CD8-positive, alpha-beta T cell (primary cell): ENCODE measurements at regions of chr2 and their contacts with region 1.

Region 1: GRCh38 chr2:102240640-102241370 is 54.0 kb downstream of the IL1RL2 start:
- DNase-seq: peak; percentile 71 to 92 (median 85)
- ATAC-seq: peak; percentile 92
- H3K4me3 ChIP-seq: no peak overlapping the region
- H3K4me3 Mint-ChIP-seq: peak overlapping the region; percentile 22
- H3K27ac ChIP-seq: peak overlapping the region in 1 of 2 experiments; percentile 22
- H3K27ac Mint-ChIP-seq: no peak overlapping the region
- H3K4me1 ChIP-seq: peaks cover 4% of the 10 kb centered on the region
- H3K4me1 Mint-ChIP-seq: peaks cover 9% of the 10 kb centered on the region
- H3K27me3 ChIP-seq: no peaks in the 10 kb centered on the region
- H3K27me3 Mint-ChIP-seq: peaks cover 2% of the 10 kb centered on the region
- CTCF ChIP-seq: peak; percentile 95

Region 2: GRCh38 chr2:100554798-100555407 is 1685.9 kb before region 1 on chr2:
- CTCF ChIA-PET with region 1: no interaction called
- POLR2A ChIA-PET with region 1: no interaction called
- intact Hi-C with region 1: no loop called
- DNase-seq: peak in 8 of 9 experiments; percentile 13 to 74 (median 42)
- ATAC-seq: peak; percentile 74
- H3K4me3 ChIP-seq: peak overlapping the region in 1 of 2 experiments; percentile 20
- H3K4me3 Mint-ChIP-seq: peak overlapping the region; percentile 67
- H3K27ac ChIP-seq: peak overlapping the region in 1 of 2 experiments; percentile 49
- H3K27ac Mint-ChIP-seq: peak overlapping the region; percentile 89
- H3K4me1 ChIP-seq: peaks cover 12% of the 10 kb centered on the region
- H3K4me1 Mint-ChIP-seq: peaks cover 21% of the 10 kb centered on the region
- H3K27me3 ChIP-seq: no peaks in the 10 kb centered on the region
- H3K27me3 Mint-ChIP-seq: no peaks in the 10 kb centered on the region
- CTCF ChIP-seq: no peak

Region 3: GRCh38 chr2:100703213-100703612 is 1537.6 kb before region 1 on chr2:
- CTCF ChIA-PET with region 1: no interaction called
- POLR2A ChIA-PET with region 1: no interaction called
- intact Hi-C with region 1: no loop called
- DNase-seq: no peak
- ATAC-seq: no peak
- H3K4me3 ChIP-seq: no peak overlapping the region
- H3K4me3 Mint-ChIP-seq: no peak overlapping the region
- H3K27ac ChIP-seq: no peak overlapping the region
- H3K27ac Mint-ChIP-seq: no peak overlapping the region
- H3K4me1 ChIP-seq: peaks cover 7% of the 10 kb centered on the region
- H3K4me1 Mint-ChIP-seq: peaks cover 26% of the 10 kb centered on the region
- H3K27me3 ChIP-seq: no peaks in the 10 kb centered on the region
- H3K27me3 Mint-ChIP-seq: no peaks in the 10 kb centered on the region
- CTCF ChIP-seq: no peak

Region 4: DNA sequence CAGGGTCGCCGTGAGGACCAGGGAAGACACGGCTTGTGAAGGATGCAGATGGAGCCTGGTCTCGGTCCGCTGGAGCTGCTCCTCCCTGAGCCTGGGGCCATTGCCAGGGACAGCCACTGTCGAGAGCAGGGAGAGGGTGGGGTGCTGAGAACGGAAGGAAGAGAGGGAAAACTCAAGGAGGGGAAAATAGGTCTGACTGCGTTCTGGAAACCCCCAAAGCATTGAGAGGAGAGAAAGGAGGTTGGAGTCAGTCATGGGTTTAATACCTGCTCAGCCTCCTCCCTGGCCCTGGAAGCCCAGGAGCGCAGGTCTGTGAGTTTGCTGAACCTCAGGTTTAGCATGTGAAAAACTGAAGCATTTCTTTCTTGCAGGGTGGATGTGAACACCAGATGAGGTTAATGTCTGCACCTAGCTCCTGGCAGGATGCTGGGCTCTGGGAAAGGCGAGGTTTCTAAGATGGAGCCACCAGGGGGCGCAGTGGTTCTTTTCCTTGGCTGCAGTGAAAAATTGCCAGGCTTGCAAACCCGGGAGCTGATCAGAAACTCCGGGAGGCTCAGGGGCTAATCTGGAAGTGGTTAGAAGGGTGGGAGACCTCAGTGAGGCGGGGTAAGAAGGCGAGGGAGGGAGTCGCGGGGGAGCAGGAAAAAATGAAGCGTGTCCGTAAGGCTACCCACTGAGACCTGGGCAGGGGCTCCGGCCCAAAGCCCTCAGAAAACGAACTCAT is 898.7 kb before region 1 on chr2:
- CTCF ChIA-PET with region 1: interaction called, 5 read pairs
- POLR2A ChIA-PET with region 1: no interaction called
- intact Hi-C with region 1: loop called in 1 of 2 experiments (anchors 2 kb)
- DNase-seq: peak; percentile 36 to 85 (median 71)
- ATAC-seq: peak; percentile 52
- H3K4me3 ChIP-seq: no peak overlapping the region
- H3K4me3 Mint-ChIP-seq: no peak overlapping the region
- H3K27ac ChIP-seq: no peak overlapping the region
- H3K27ac Mint-ChIP-seq: no peak overlapping the region
- H3K4me1 ChIP-seq: peaks cover 15% of the 10 kb centered on the region
- H3K4me1 Mint-ChIP-seq: peaks cover 24% of the 10 kb centered on the region
- H3K27me3 ChIP-seq: no peaks in the 10 kb centered on the region
- H3K27me3 Mint-ChIP-seq: no peaks in the 10 kb centered on the region
- CTCF ChIP-seq: peak; percentile 76

Region 5: GRCh38 chr2:102005989-102006885 is 234.6 kb before region 1 on chr2:
- CTCF ChIA-PET with region 1: interaction called, 69 read pairs
- POLR2A ChIA-PET with region 1: interaction called, 4 read pairs
- intact Hi-C with region 1: no loop called
- DNase-seq: peak in 3 of 9 experiments; percentile 20 to 67 (median 51)
- ATAC-seq: peak; percentile 51
- H3K4me3 ChIP-seq: no peak overlapping the region
- H3K4me3 Mint-ChIP-seq: no peak overlapping the region
- H3K27ac ChIP-seq: no peak overlapping the region
- H3K27ac Mint-ChIP-seq: no peak overlapping the region
- H3K4me1 ChIP-seq: peaks cover 14% of the 10 kb centered on the region
- H3K4me1 Mint-ChIP-seq: no peaks in the 10 kb centered on the region
- H3K27me3 ChIP-seq: peaks cover 0 to 3% of the 10 kb centered on the region in 2 experiments
- H3K27me3 Mint-ChIP-seq: no peaks in the 10 kb centered on the region
- CTCF ChIP-seq: peak; percentile 41

Region 6: GRCh38 chr2:102033031-102033749 is 207.6 kb before region 1 on chr2:
- CTCF ChIA-PET with region 1: interaction called, 23 read pairs
- POLR2A ChIA-PET with region 1: no interaction called
- intact Hi-C with region 1: no loop called
- DNase-seq: peak in 2 of 9 experiments; percentile 27 to 51
- ATAC-seq: peak; percentile 38
- H3K4me3 ChIP-seq: no peak overlapping the region
- H3K4me3 Mint-ChIP-seq: peak overlapping the region; percentile 58
- H3K27ac ChIP-seq: no peak overlapping the region
- H3K27ac Mint-ChIP-seq: peak overlapping the region; percentile 60
- H3K4me1 ChIP-seq: peaks cover 23% of the 10 kb centered on the region
- H3K4me1 Mint-ChIP-seq: peaks cover 31% of the 10 kb centered on the region
- H3K27me3 ChIP-seq: no peaks in the 10 kb centered on the region
- H3K27me3 Mint-ChIP-seq: no peaks in the 10 kb centered on the region
- CTCF ChIP-seq: no peak

Region 7: GRCh38 chr2:102217032-102217431 is 23.8 kb before region 1 on chr2:
- CTCF ChIA-PET with region 1: interaction called, 17 read pairs
- POLR2A ChIA-PET with region 1: no interaction called
- intact Hi-C with region 1: no loop called
- DNase-seq: no peak
- ATAC-seq: no peak
- H3K4me3 ChIP-seq: no peak overlapping the region
- H3K4me3 Mint-ChIP-seq: no peak overlapping the region
- H3K27ac ChIP-seq: no peak overlapping the region
- H3K27ac Mint-ChIP-seq: no peak overlapping the region
- H3K4me1 ChIP-seq: peaks cover 5% of the 10 kb centered on the region
- H3K4me1 Mint-ChIP-seq: peaks cover 16% of the 10 kb centered on the region
- H3K27me3 ChIP-seq: no peaks in the 10 kb centered on the region
- H3K27me3 Mint-ChIP-seq: no peaks in the 10 kb centered on the region
- CTCF ChIP-seq: no peak

Region 8: GRCh38 chr2:102271844-102272243 is 31.0 kb after region 1 on chr2:
- CTCF ChIA-PET with region 1: interaction called, 10 read pairs
- POLR2A ChIA-PET with region 1: no interaction called
- intact Hi-C with region 1: no loop called
- DNase-seq: peak in 2 of 9 experiments; percentile 38 to 44
- ATAC-seq: peak; percentile 48
- H3K4me3 ChIP-seq: no peak overlapping the region
- H3K4me3 Mint-ChIP-seq: peak overlapping the region; percentile 35
- H3K27ac ChIP-seq: no peak overlapping the region
- H3K27ac Mint-ChIP-seq: peak overlapping the region; percentile 52
- H3K4me1 ChIP-seq: peaks cover 13% of the 10 kb centered on the region
- H3K4me1 Mint-ChIP-seq: peaks cover 21% of the 10 kb centered on the region
- H3K27me3 ChIP-seq: peaks cover 0 to 5% of the 10 kb centered on the region in 2 experiments
- H3K27me3 Mint-ChIP-seq: no peaks in the 10 kb centered on the region
- CTCF ChIP-seq: peak; percentile 18

Region 9: DNA sequence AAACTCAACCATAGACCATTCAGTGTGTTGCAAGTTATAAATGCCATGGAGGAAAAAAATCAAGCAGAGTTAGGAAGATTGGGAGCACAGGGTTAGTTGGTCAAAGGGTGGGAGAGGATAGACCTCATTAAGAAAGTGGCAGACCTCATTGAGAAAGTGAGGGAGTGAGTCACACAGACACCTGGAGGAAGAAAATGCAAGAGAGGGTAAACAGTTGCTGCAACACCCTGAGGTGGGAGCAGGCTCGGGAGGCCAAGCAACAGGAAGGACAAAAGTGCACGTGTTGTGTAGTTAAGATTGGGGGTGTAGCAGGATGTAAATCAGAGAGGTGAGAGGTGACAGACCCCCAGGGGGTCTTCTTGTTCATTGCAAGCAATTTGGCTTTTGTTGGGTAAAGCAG is 76.9 kb after region 1 on chr2:
- CTCF ChIA-PET with region 1: no interaction called
- POLR2A ChIA-PET with region 1: no interaction called
- intact Hi-C with region 1: no loop called
- DNase-seq: no peak
- ATAC-seq: no peak
- H3K4me3 ChIP-seq: no peak overlapping the region
- H3K4me3 Mint-ChIP-seq: no peak overlapping the region
- H3K27ac ChIP-seq: no peak overlapping the region
- H3K27ac Mint-ChIP-seq: no peak overlapping the region
- H3K4me1 ChIP-seq: no peaks in the 10 kb centered on the region
- H3K4me1 Mint-ChIP-seq: no peaks in the 10 kb centered on the region
- H3K27me3 ChIP-seq: no peaks in the 10 kb centered on the region
- H3K27me3 Mint-ChIP-seq: no peaks in the 10 kb centered on the region
- CTCF ChIP-seq: no peak

Region 10: DNA sequence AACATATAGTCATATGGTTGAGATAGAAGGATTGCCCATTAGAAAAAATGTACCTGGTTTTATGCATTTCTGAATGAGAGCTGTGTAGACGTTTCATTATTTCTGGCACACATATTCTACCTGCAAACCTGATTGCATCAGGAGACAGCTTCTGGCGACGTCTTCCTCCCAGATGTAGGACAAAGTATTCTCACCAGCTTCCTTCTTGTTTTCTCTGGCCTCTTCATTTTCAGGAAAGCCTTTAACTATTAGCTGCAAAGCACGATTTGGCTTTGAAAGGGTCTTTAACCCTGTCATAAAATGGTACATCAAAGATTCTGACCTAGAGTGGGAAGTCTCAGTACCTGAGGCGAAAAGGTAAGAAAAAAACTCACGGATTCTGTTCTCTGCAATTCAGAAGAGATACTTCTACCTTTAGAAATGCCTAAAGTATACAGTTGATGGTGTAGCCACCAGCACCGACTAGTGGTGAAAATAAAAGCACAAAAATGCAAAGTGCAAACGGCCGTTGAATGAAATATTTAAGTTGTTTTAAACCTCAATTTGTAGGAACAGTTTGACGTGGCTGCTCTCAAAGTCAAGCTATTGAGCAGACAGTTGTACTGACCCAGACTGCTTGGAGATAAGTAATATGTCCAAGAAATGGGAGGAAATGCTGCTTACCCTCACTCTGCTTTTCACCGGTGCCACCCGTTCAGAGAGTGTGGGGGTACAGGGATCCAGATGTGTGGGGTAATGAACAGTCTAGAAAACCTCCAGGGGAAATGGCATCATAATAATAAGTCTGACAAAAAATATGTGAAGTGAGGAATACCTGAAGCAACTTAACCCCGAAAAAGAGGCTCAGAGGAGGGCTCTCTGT is 202.4 kb after region 1 on chr2:
- CTCF ChIA-PET with region 1: interaction called, 60 read pairs
- POLR2A ChIA-PET with region 1: interaction called, 4 read pairs
- intact Hi-C with region 1: loop called (anchors 2 to 5 kb)
- DNase-seq: peak; percentile 8 to 76 (median 44)
- ATAC-seq: peak; percentile 73
- H3K4me3 ChIP-seq: no peak overlapping the region
- H3K4me3 Mint-ChIP-seq: no peak overlapping the region
- H3K27ac ChIP-seq: no peak overlapping the region
- H3K27ac Mint-ChIP-seq: peak overlapping the region; percentile 64
- H3K4me1 ChIP-seq: peaks cover 4% of the 10 kb centered on the region
- H3K4me1 Mint-ChIP-seq: peaks cover 9% of the 10 kb centered on the region
- H3K27me3 ChIP-seq: no peaks in the 10 kb centered on the region
- H3K27me3 Mint-ChIP-seq: no peaks in the 10 kb centered on the region
- CTCF ChIP-seq: peak; percentile 94